CD4-positive, alpha-beta T cell (primary cell): ENCODE measurements at regions of chr18 and their contacts with region 1.

Region 1: GRCh38 chr18:31274915-31275314 is 43.0 kb upstream of the DSG1 start:
- DNase-seq: no peak
- ATAC-seq: no peak
- H3K4me3 ChIP-seq: no peak overlapping the region
- H3K4me3 Mint-ChIP-seq: no peak overlapping the region
- H3K27ac ChIP-seq: no peak overlapping the region
- H3K27ac Mint-ChIP-seq: no peak overlapping the region
- H3K4me1 ChIP-seq: no peaks in the 10 kb centered on the region
- H3K4me1 Mint-ChIP-seq: no peaks in the 10 kb centered on the region
- H3K27me3 ChIP-seq: no peaks in the 10 kb centered on the region
- H3K27me3 Mint-ChIP-seq: no peaks in the 10 kb centered on the region
- CTCF ChIP-seq: no peak

Region 2: GRCh38 chr18:30945761-30946160 is 329.2 kb before region 1 on chr18:
- CTCF ChIA-PET with region 1: no interaction called
- POLR2A ChIA-PET with region 1: no interaction called
- intact Hi-C with region 1: no loop called
- DNase-seq: no peak
- ATAC-seq: no peak
- H3K4me3 ChIP-seq: no peak overlapping the region
- H3K4me3 Mint-ChIP-seq: no peak overlapping the region
- H3K27ac ChIP-seq: no peak overlapping the region
- H3K27ac Mint-ChIP-seq: no peak overlapping the region
- H3K4me1 ChIP-seq: no peaks in the 10 kb centered on the region
- H3K4me1 Mint-ChIP-seq: no peaks in the 10 kb centered on the region
- H3K27me3 ChIP-seq: no peaks in the 10 kb centered on the region
- H3K27me3 Mint-ChIP-seq: no peaks in the 10 kb centered on the region
- CTCF ChIP-seq: no peak

Region 3: DNA sequence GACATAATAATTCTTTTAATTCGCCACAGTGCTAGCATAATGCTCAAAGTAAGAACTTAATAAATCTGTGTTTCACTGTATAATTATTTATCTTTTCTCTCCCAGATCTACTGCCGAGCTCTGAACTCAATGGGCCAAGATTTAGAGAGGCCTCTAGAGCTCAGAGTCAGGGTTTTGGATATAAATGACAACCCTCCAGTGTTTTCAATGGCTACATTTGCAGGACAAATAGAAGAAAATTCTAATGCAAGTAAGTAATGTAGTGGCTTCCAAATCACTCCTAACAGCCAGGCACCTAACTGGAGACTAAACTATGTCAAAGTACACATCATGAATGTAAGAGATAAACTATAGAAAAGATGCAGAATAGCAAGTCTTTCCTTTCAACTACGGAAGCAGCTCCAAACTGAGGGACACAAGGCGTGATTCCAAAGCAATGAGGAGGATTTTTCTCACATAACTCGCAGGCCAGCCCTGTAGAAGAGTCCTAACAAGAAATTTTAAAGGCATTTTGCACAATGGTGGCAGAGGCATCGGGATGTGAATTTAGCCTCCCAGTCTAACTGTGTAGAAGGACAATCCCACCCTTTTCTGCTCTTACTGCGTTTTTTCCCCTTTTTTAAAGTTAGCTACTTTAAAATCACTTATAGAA is 55.0 kb after region 1 on chr18:
- CTCF ChIA-PET with region 1: no interaction called
- POLR2A ChIA-PET with region 1: no interaction called
- intact Hi-C with region 1: loop called in 1 of 2 experiments (anchors 10 kb)
- DNase-seq: no peak
- ATAC-seq: no peak
- H3K4me3 ChIP-seq: no peak overlapping the region
- H3K4me3 Mint-ChIP-seq: no peak overlapping the region
- H3K27ac ChIP-seq: no peak overlapping the region
- H3K27ac Mint-ChIP-seq: no peak overlapping the region
- H3K4me1 ChIP-seq: no peaks in the 10 kb centered on the region
- H3K4me1 Mint-ChIP-seq: no peaks in the 10 kb centered on the region
- H3K27me3 ChIP-seq: no peaks in the 10 kb centered on the region
- H3K27me3 Mint-ChIP-seq: no peaks in the 10 kb centered on the region
- CTCF ChIP-seq: no peak